Transverse colon (tissue), 4 donors: ENCODE measurements at regions of chr14 and their contacts with region 1.

Region 1: DNA sequence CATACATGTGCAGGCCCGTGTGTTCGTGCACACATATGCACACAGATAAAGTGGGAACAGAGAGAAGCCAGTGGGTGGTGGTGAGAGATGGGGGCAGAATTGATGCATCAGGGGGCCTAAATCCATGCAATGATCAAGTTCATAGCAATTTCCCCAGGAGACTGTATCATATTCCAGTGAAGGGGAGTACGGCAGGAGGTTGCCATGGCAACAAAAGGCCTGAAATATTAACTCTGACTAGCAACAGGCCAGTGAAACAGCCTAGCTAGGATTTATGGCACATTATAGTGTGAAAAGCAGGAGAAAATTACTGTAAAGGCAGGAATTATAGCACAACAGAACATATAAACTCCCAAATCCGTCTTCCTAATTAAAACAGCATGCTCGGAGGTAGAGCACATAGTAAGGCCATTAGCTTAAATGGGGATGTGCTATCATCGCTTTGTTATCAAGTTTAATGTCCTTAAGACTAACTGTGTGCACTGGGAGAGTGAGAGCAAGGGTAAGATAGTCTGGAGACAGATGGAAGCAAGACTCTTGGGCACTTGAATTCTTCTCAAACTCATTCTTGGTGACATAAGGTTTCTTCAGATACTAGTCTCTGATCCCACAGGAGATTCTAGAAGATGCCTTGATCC is 806.3 kb downstream of the DIO2 start:
- DNase-seq: no peak
- H3K4me3 ChIP-seq: no peak overlapping the region
- H3K27ac ChIP-seq: no peak overlapping the region
- H3K4me1 ChIP-seq: no peaks in the 10 kb centered on the region
- H3K27me3 ChIP-seq: no peaks in the 10 kb centered on the region
- CTCF ChIP-seq: no peak
- EP300 ChIP-seq: no peak
- POLR2A ChIP-seq: no peak

Region 2: DNA sequence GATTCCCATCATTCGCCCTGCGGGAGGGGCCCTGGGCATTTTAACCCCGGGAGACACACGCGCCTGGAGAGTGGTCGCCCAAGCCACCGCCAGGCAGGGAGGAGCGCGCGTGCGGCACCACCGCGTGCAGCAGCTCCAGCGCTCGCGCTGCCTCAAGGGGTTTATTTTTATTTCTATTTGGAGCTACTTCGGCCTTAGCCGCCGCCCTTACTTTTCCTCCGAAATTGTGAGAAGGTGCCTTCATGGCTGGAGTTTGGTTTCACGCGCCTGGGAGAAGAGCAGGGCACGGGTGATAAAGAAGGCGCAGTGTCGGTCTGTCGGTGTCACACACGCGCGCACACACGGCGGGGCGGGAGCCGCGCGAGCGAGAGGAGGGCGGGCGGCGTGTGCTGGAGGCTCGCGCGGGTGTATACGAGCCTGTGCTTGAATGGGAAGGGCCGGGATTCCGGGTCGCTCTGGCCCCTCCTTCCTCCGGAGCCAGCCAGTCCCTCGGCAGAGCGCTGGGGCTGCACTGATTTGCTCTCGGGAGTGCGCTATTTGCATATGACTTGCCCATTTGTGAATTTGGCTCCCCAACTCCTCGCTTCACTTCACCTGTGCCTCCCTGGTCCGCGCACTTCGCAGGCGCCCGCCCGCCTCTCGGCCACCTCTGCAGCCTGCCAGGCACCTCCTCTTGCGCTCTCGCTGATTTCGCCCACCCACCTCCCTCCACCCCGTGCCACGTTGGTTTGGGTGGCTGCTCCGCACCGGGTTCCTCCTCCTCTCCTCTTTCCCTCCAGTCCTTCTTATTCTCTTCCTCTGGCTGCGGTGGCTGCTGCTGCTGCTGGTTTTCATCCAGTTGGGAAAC is 126.0 kb before region 1 on chr14:
- in situ Hi-C with region 1: no loop called
- intact Hi-C with region 1: no loop called
- DNase-seq: peak; percentile 82
- H3K4me3 ChIP-seq: peak overlapping the region; percentile 33 to 59 (median 44)
- H3K27ac ChIP-seq: peak overlapping the region; percentile 55 to 70 (median 62)
- H3K4me1 ChIP-seq: peaks cover 0 to 19% (median 7%) of the 10 kb centered on the region in 4 donors
- H3K27me3 ChIP-seq: peaks cover 59% of the 10 kb centered on the region
- CTCF ChIP-seq: no peak
- EP300 ChIP-seq: no peak
- POLR2A ChIP-seq: peak; percentile 26

Region 3: GRCh38 chr14:79426103-79426755 is 21.2 kb after region 1 on chr14:
- in situ Hi-C with region 1: no loop called
- intact Hi-C with region 1: loop called (anchors 1 kb)
- DNase-seq: no peak
- H3K4me3 ChIP-seq: no peak overlapping the region
- H3K27ac ChIP-seq: no peak overlapping the region
- H3K4me1 ChIP-seq: peaks cover 0 to 12% (median 2%) of the 10 kb centered on the region in 4 donors
- H3K27me3 ChIP-seq: no peaks in the 10 kb centered on the region
- CTCF ChIP-seq: no peak
- EP300 ChIP-seq: no peak
- POLR2A ChIP-seq: no peak